ENCODE measurements at regions of chr1 and their contacts with region 1.

Region 1: DNA sequence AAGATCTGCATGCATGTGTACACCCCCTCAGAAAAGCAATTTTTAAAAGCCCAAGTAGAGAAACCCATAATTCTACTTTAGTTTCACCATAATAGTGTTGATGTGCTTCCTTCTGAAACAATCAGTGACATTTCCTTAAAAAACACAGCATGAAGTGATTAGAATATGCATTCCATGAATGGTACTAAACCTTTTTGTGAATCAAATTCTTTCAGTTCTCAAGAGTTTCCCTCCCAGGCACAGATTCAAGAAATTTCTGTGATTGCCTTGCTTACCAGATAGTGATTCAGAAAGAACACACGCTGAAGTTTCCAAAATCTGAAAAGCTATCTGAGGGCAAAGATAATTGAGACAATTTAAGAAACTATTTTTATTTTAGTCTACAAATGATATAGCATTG is 136.4 kb upstream of the ADGRL2 start:
- DNase-seq: no peak
- H3K4me3 Mint-ChIP-seq: no peak overlapping the region
- H3K27ac Mint-ChIP-seq: no peak overlapping the region
- H3K4me1 Mint-ChIP-seq: no peaks in the 10 kb centered on the region
- H3K27me3 Mint-ChIP-seq: no peaks in the 10 kb centered on the region
- CTCF ChIP-seq: no peak

Region 2: DNA sequence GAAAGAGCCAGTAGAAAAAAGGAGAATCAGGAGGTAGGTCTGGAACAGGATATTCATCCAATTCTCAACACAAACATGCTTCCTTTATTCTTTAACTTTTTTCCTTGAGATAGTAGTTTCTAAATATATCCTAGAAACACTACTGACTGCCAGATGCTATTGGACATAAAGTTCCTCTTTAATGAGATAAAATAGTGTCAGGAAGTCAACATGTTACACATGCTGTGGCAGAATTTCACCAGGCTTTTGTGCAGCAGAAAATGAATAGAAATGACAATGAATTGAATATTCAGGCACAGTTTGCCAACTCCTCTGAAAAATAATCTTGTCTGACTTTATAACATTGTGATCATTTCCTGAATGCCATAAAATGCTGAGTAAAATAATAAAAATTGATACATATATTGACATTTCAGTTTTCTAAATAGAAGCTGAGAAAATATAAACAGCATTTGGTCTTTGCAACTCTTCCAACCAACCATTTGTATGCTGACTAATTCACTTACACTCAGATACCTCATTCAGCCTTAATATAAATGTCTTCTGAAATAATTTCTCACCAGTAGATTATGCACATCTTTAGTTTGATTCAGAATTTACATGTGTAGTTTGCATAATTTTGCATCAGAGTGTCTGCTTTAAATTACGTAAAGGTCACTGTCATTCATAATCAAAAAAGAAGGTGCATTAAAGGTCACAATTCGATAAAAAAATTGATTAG is 349.7 kb before region 1 on chr1:
- CTCF ChIA-PET with region 1: no interaction called
- intact Hi-C with region 1: no loop called
- DNase-seq: no peak
- H3K4me3 Mint-ChIP-seq: no peak overlapping the region
- H3K27ac Mint-ChIP-seq: no peak overlapping the region
- H3K4me1 Mint-ChIP-seq: no peaks in the 10 kb centered on the region
- H3K27me3 Mint-ChIP-seq: no peaks in the 10 kb centered on the region
- CTCF ChIP-seq: no peak

Region 3: GRCh38 chr1:82464362-82465001 is 800.1 kb after region 1 on chr1:
- CTCF ChIA-PET with region 1: no interaction called
- intact Hi-C with region 1: loop called (anchors 5 kb)
- DNase-seq: peak; percentile 1
- H3K4me3 Mint-ChIP-seq: no peak overlapping the region
- H3K27ac Mint-ChIP-seq: no peak overlapping the region
- H3K4me1 Mint-ChIP-seq: no peaks in the 10 kb centered on the region
- H3K27me3 Mint-ChIP-seq: no peaks in the 10 kb centered on the region
- CTCF ChIP-seq: no peak

Measured in Calu3 (cell line).